ENCODE measurements at regions of chr1 and their contacts with region 1.

Region 1: GRCh38 chr1:155044812-155045690 is 6.1 kb upstream of the ADAM15 start:
- DNase-seq: peak; percentile 60 to 66 (median 64)
- H3K4me3 ChIP-seq: no peak overlapping the region
- H3K4me3 Mint-ChIP-seq: no peak overlapping the region
- H3K27ac ChIP-seq: no peak overlapping the region
- H3K27ac Mint-ChIP-seq: peak overlapping the region in 1 of 7 donors; percentile 5
- H3K4me1 ChIP-seq: peaks cover 5% of the 10 kb centered on the region
- H3K4me1 Mint-ChIP-seq: peaks cover 7 to 16% (median 11%) of the 10 kb centered on the region in 4 donors
- H3K27me3 ChIP-seq: no peaks in the 10 kb centered on the region
- H3K27me3 Mint-ChIP-seq: no peaks in the 10 kb centered on the region

Region 2: DNA sequence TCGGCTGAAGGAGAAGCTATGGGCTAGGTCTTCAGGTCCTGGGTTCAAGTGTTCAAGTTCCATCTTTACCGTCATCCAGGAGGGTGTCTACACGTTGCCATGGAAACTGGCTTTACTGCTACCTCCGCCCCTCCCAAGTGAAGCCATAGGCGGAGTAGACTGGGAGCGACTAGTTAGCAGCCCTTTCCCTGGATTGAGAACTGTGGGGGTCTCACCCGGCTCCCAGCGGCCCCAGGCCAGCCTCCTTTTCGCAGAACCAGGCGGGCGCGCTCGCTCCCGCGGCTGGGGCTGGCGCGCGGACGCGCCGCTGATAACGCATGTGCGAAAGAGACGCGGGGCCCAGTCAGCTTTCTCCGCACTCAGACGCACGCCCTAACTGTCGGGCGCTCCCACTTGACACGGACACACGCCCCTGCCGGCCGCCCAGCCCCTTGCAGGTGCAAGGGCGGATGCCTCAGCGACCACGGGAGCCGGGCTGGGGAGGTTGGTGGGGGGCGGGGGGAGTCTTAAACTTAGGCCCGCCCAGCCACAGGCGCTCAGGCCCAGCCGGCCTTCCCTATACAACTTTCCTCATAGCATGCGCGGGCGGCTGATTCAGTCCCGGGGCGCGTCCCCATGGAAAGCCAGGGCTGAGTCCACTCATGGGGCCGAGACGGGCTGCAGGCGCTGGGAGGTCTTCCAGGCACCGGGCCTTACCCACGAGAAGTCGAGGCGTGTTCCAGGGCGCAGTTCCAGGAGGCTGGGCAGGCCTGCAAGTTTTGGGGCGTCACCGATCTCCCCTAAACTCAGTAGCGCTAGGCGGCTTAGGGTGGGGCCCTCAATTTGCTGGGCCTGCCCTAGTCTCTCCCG is 25.9 kb after region 1 on chr1:
- CTCF ChIA-PET with region 1: interaction called, 10 read pairs
- POLR2A ChIA-PET with region 1: no interaction called
- intact Hi-C with region 1: no loop called
- DNase-seq: peak; percentile 73 to 87 (median 79)
- H3K4me3 ChIP-seq: peak overlapping the region; percentile 14 to 40
- H3K4me3 Mint-ChIP-seq: peak overlapping the region in 7 of 8 donors; percentile 10 to 68 (median 60)
- H3K27ac ChIP-seq: no peak overlapping the region
- H3K27ac Mint-ChIP-seq: peak overlapping the region in 2 of 7 donors; percentile 13 to 80
- H3K4me1 ChIP-seq: peaks cover 30% of the 10 kb centered on the region
- H3K4me1 Mint-ChIP-seq: peaks cover 14 to 55% (median 32%) of the 10 kb centered on the region in 4 donors
- H3K27me3 ChIP-seq: no peaks in the 10 kb centered on the region
- H3K27me3 Mint-ChIP-seq: no peaks in the 10 kb centered on the region

Region 3: GRCh38 chr1:155324611-155325528 is 279.8 kb after region 1 on chr1:
- CTCF ChIA-PET with region 1: no interaction called
- POLR2A ChIA-PET with region 1: no interaction called
- intact Hi-C with region 1: no loop called
- DNase-seq: peak in 1 of 5 donors; percentile 51
- H3K4me3 ChIP-seq: peak overlapping the region; percentile 91 to 96
- H3K4me3 Mint-ChIP-seq: peak overlapping the region; percentile 70 to 91 (median 88)
- H3K27ac ChIP-seq: peak overlapping the region; percentile 96
- H3K27ac Mint-ChIP-seq: peak overlapping the region; percentile 29 to 93 (median 77)
- H3K4me1 ChIP-seq: peaks cover 31% of the 10 kb centered on the region
- H3K4me1 Mint-ChIP-seq: peaks cover 11 to 40% (median 28%) of the 10 kb centered on the region in 4 donors
- H3K27me3 ChIP-seq: no peaks in the 10 kb centered on the region
- H3K27me3 Mint-ChIP-seq: no peaks in the 10 kb centered on the region